Upper lobe of right lung (tissue), 1 donor: ENCODE measurements at regions of chr17 and their contacts with region 1.

Region 1: GRCh38 chr17:42677008-42677857 is 439 bp upstream of the PLEKHH3 start:
- DNase-seq: peak; percentile 100
- ATAC-seq: peak; percentile 83
- H3K4me3 ChIP-seq: peak overlapping the region; percentile 89
- H3K27ac ChIP-seq: peak overlapping the region; percentile 89
- H3K4me1 ChIP-seq: peaks cover 58% of the 10 kb centered on the region
- H3K27me3 ChIP-seq: no peaks in the 10 kb centered on the region
- CTCF ChIP-seq: no peak

Region 2: GRCh38 chr17:42527273-42527703 is 149.9 kb before region 1 on chr17:
- intact Hi-C with region 1: no loop called
- DNase-seq: no peak
- ATAC-seq: peak; percentile 82
- H3K4me3 ChIP-seq: no peak overlapping the region
- H3K27ac ChIP-seq: peak overlapping the region; percentile 17
- H3K4me1 ChIP-seq: peaks cover 54% of the 10 kb centered on the region
- H3K27me3 ChIP-seq: no peaks in the 10 kb centered on the region
- CTCF ChIP-seq: peak; percentile 80

Region 3: GRCh38 chr17:42577532-42578281 is 99.5 kb before region 1 on chr17 and contains the start of gene PSMC3IP:
- intact Hi-C with region 1: loop called (anchors 2 kb)
- DNase-seq: peak; percentile 98
- ATAC-seq: peak; percentile 97
- H3K4me3 ChIP-seq: peak within 1 kb of the TSS; percentile 62
- H3K27ac ChIP-seq: peak within 1 kb of the TSS; percentile 86
- H3K4me1 ChIP-seq: peaks cover 8% of the 10 kb centered on the region
- H3K27me3 ChIP-seq: no peaks in the 10 kb centered on the region
- CTCF ChIP-seq: peak; percentile 37
- total RNA-seq, gene PSMC3IP: 4.2 TPM

Region 4: DNA sequence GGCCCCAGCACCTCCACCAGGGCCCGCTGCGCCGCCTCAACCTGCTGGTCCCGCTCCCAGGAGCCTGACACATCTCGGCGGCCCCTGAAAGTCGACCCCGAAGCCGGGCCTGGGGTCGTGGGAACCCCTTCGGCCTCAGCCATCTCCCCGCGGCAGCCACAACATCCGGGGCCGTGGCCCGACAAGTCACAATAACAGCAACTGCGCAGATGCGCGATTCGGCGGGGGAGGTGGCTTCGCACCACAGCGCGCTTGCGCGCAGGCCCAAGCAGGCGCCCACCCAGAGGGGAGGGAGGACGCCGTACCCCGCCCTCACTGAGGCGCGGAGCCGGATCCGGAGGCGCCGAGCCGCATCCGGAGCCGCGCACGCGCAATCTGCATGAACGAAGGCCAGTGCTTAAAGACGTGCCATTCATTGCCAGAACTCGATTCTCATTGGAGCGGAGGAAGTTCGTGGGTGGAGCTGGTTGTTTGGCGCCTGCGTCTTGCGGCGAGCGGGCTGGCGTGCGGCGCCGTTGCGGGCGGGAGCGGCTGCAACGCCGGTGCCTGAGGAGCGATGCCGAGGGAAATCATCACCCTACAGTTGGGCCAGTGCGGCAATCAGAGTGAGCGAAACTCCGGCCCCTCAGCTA is 67.9 kb before region 1 on chr17 and contains the starts of genes RETREG3 and TUBG1:
- intact Hi-C with region 1: no loop called
- DNase-seq: peak; percentile 100
- ATAC-seq: peak; percentile 98
- H3K4me3 ChIP-seq: peak within 1 kb of the TSS; percentile 94
- H3K27ac ChIP-seq: peak within 1 kb of the TSS; percentile 96
- H3K4me1 ChIP-seq: peaks cover 33% of the 10 kb centered on the region
- H3K27me3 ChIP-seq: no peaks in the 10 kb centered on the region
- CTCF ChIP-seq: peak; percentile 53
- total RNA-seq, gene RETREG3: 68.6 TPM
- total RNA-seq, gene TUBG1: 29.2 TPM